ENCODE measurements at regions of chr1 and their contacts with region 1.

Region 1: DNA sequence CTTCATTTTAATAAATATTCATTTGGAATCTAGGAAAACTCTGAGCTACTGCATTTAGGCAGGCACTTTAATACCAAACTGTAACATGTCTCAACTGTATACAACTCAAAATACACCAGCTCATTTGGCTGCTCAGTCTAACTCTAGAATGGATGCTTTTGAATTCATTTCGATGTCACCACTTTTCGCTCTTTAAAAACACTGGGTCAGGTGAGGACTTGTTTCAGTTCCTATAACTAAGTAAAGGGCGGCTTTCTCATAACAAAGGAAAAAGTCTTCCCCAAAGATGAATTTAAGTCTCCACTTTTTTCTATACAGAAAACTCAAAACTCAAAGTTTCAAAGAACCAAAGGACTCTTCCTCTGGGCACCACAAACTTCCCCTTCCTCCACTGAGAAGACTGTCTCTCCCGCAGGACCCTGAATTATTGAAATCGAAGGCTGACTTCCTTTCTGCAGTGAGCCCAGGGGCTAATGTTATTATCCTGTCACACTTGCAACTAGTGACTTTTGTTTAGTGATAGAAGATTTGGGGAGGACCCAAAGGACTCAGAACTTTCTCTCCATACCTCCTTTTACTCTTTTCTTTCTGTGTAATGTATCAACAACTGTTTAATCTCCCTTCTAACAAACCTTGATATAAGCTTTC is 9.7 kb upstream of the DHX9 start:
- DNase-seq: no peak

Region 2: GRCh38 chr1:182595641-182596240 is 233.7 kb before region 1 on chr1:
- in situ Hi-C with region 1: loop called (anchors 10 kb)
- DNase-seq: peak; percentile 59

Measured in G401 (cell line).